ENCODE measurements at regions of chr18 and their contacts with region 1.

Region 1: GRCh38 chr18:25253136-25253535 is 98.8 kb downstream of the ZNF521 start:
- DNase-seq: no peak
- ATAC-seq: no peak
- H3K4me3 ChIP-seq: no peak overlapping the region
- H3K4me3 Mint-ChIP-seq: no peak overlapping the region
- H3K27ac ChIP-seq: no peak overlapping the region
- H3K27ac Mint-ChIP-seq: no peak overlapping the region
- H3K4me1 ChIP-seq: no peaks in the 10 kb centered on the region
- H3K4me1 Mint-ChIP-seq: no peaks in the 10 kb centered on the region
- H3K27me3 ChIP-seq: no peaks in the 10 kb centered on the region
- H3K27me3 Mint-ChIP-seq: peaks cover 0 to 6% of the 10 kb centered on the region in 2 donors
- CTCF ChIP-seq: no peak

Region 2: DNA sequence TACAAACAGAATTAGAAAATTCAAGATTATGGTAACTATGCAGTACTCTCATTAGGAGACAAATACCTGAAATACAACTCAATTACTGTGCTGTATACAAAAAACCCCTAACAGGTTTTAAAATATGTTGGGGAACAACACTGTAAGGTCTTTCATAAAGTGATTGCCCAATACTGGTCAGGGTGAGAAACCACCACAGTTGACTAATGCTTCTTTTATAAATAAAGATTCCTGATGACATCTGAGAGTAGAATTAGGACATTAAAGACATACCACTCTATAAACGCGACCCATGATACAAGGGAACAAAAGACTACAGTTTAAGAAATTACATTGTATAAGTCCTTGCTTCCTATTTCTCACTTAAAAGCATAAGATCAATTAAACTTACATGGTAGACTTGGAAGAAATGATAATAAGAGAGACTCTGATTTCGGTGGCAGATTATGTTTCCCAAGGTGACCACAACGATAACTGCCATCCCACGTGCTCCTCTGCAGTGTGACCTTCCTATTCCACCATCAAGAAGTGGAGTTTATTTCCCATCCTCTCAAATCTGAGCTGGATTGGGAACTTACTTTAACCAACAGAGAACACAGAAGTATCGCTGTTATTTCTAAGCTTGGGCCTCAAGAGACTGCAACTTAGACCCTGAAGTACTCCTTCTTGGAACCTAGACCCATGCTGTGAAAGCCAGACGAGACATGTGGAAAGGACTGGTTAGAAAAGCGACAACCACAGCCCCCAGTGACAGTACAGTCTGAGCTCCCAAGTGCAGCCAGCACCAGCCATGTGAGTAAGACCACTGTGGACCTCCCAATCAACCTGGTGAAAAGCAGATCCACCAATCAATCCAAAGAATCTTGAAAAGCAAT is 46.5 kb after region 1 on chr18:
- intact Hi-C with region 1: loop called (anchors 10 kb)
- DNase-seq: no peak
- ATAC-seq: peak in 1 of 3 donors; percentile 68
- H3K4me3 ChIP-seq: no peak overlapping the region
- H3K4me3 Mint-ChIP-seq: no peak overlapping the region
- H3K27ac ChIP-seq: no peak overlapping the region
- H3K27ac Mint-ChIP-seq: no peak overlapping the region
- H3K4me1 ChIP-seq: peaks cover 4% of the 10 kb centered on the region
- H3K4me1 Mint-ChIP-seq: peaks cover 15 to 18% of the 10 kb centered on the region in 2 donors
- H3K27me3 ChIP-seq: no peaks in the 10 kb centered on the region
- H3K27me3 Mint-ChIP-seq: peaks cover 0 to 25% of the 10 kb centered on the region in 2 donors
- CTCF ChIP-seq: no peak

Measured in natural killer cell (primary cell).